Heart right ventricle (tissue), 16 donors: ENCODE measurements at regions of chr13 and their contacts with region 1.

Region 1: DNA sequence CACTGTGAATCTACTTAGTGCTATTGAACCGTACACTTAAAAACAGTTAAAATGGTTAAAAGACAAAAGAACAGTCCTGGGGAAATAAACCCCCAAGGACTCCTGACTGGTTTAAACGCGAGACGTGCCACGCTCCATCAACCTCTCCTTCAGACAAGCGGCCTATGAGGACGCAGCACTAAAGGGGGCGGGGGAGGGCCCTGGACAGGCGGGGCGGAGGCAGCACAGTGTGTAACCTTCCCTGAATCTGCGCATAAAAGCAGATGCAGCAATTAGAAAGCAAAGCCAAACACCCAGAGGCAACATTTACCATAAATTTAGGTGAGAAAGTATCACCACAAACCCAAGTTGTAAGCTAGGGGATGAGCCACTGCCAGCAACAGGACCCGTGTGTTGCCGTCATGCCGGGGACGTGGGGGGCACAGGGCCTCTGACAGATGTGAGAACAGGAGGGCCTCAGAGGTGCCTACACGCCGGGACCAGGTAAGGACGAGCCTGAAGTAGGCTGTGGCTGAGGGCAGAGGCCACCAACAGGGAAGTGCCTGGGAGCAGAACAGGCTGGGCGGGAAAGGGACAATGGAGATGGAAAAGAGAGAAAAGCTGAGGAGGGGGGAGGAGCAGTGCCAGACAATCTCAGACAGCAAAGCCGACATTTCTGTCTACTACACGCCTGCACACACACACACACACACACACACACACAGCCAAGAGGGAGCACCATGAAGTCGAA is 15.3 kb upstream of the ADPRHL1 start:
- DNase-seq: no peak
- ATAC-seq: peak in 4 of 8 donors; percentile 38 to 78 (median 65)
- H3K4me3 ChIP-seq: no peak overlapping the region
- H3K27ac ChIP-seq: peak overlapping the region in 1 of 10 donors; percentile 17
- H3K4me1 ChIP-seq: peaks cover 0 to 21% (median 6%) of the 10 kb centered on the region in 9 donors
- H3K27me3 ChIP-seq: no peaks in the 10 kb centered on the region
- CTCF ChIP-seq: no peak

Region 2: GRCh38 chr13:113140677-113141600 is 327.7 kb before region 1 on chr13:
- intact Hi-C with region 1: no loop called
- DNase-seq: no peak
- ATAC-seq: no peak
- H3K4me3 ChIP-seq: no peak overlapping the region
- H3K27ac ChIP-seq: no peak overlapping the region
- H3K4me1 ChIP-seq: no peaks in the 10 kb centered on the region
- H3K27me3 ChIP-seq: no peaks in the 10 kb centered on the region
- CTCF ChIP-seq: no peak

Region 3: DNA sequence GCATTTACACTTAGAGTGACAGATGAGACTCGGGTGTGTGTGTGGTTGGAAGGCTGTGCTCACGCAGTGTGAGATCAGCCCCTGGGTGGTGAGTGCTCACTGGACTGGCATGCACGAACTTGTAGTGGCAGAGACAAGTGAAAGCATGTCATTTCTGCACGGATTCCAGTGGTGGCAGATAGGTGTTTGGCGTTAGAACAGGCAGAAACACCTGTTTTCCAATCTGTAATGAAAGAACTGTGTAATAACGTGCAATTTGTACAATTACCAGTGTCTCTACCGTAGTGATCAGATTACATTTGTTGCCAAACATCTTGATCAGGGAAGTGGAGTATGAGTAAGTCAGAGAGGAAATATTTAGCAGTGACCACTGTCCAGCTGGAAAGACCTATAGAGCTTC is 163.4 kb before region 1 on chr13:
- intact Hi-C with region 1: no loop called
- DNase-seq: no peak
- ATAC-seq: peak in 2 of 8 donors; percentile 39 to 44
- H3K4me3 ChIP-seq: no peak overlapping the region
- H3K27ac ChIP-seq: no peak overlapping the region
- H3K4me1 ChIP-seq: peaks cover 0 to 25% (median 3%) of the 10 kb centered on the region in 9 donors
- H3K27me3 ChIP-seq: no peaks in the 10 kb centered on the region
- CTCF ChIP-seq: no peak

Region 4: GRCh38 chr13:113552786-113553432 is 84.3 kb after region 1 on chr13:
- intact Hi-C with region 1: loop called in 1 of 10 experiments (anchors 10 kb)
- DNase-seq: no peak
- ATAC-seq: peak in 3 of 8 donors; percentile 12 to 46 (median 39)
- H3K4me3 ChIP-seq: no peak overlapping the region
- H3K27ac ChIP-seq: peak overlapping the region in 3 of 10 donors; percentile 33 to 54 (median 46)
- H3K4me1 ChIP-seq: peaks cover 2 to 29% (median 12%) of the 10 kb centered on the region in 9 donors
- H3K27me3 ChIP-seq: no peaks in the 10 kb centered on the region
- CTCF ChIP-seq: no peak